Posterior vena cava (tissue), 2 donors: ENCODE measurements at regions of chr16 and their contacts with region 1.

Region 1: GRCh38 chr16:53043986-53044601 is 8.6 kb downstream of the CHD9NB start:
- DNase-seq: no peak

Region 2: DNA sequence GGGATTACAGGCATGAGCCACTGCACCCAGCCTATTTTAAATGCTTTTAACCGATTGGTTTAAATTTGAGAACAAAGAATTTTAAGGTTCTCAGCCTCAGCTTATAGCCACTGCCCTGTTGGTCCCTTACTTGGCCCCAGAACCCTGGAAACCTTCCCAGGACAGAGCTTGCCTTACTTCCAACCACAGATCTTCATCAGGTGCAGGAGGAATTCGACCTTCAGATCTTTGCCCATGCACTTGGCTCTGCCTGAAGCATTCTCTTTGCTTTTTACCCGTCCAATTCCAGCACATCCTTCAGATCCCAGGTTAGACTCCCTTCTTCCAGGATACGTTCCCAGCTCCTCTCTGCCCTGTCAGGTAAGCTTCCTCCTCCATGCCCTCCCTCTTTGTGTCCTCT is 38.4 kb after region 1 on chr16:
- intact Hi-C with region 1: loop called in 1 of 2 experiments (anchors 1 kb)
- DNase-seq: no peak